Gastrocnemius medialis (tissue), 4 donors: ENCODE measurements at regions of chr2 and their contacts with region 1.

Region 1: GRCh38 chr2:156341452-156342253 is 9.1 kb upstream of the NR4A2 start:
- DNase-seq: peak; percentile 79 to 87
- ATAC-seq: peak; percentile 83 to 84
- H3K4me3 ChIP-seq: peak overlapping the region; percentile 92 to 99 (median 96)
- H3K27ac ChIP-seq: peak overlapping the region; percentile 98 to 100 (median 100)
- H3K4me1 ChIP-seq: peaks cover 16 to 29% of the 10 kb centered on the region in 2 donors
- H3K27me3 ChIP-seq: no peaks in the 10 kb centered on the region
- CTCF ChIP-seq: no peak
- POLR2A ChIP-seq: peak; percentile 65 to 71

Region 2: DNA sequence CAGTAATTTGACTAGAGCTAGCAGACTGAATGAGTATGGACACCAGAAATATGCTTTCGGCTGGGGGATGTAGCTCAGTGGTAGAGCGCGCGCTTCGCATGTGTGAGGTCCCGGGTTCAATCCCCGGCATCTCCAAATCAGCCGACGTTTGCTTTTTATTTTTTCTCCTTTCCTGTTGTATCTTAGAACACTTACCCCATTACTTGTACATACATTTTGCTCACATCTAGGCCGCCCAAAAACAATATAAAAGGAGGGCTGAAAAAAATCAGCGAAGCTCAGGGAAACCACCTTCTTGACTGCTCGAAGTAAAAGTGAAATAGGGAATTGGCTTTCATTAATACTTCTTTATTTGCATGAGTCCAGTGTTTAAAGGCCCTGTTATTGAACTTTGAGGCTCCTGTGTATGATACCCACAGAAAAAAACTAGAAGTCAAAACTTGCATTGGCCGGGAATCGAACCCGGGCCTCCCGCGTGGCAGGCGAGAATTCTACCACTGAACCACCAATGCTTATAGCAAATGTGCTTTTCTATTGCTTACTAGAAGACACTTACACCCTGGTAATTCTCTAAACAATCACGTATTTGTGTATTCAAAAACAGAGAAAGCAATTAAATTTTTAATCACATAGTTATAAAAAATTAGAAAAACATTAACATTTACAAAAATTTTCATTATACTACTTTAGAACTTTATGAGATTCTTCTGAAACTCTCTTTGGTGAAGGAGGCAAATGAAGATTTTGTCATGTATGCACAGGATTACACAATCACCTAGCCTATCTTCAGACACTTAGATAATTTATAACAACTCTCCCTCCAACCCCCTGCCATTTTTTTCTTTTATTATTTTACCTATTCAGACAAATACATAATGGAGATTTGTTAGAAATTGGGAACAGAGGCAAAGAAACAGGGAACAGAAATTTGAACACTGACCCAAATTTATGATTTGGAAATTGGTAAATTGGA is 59.3 kb after region 1 on chr2:
- in situ Hi-C with region 1: loop called in 3 of 4 experiments (anchors 10 kb)
- intact Hi-C with region 1: loop called (anchors 1 kb)
- DNase-seq: peak; percentile 39 to 44
- ATAC-seq: peak; percentile 71 to 86
- H3K4me3 ChIP-seq: peak overlapping the region; percentile 60 to 73 (median 69)
- H3K27ac ChIP-seq: peak overlapping the region; percentile 88 to 98 (median 92)
- H3K4me1 ChIP-seq: peaks cover 6 to 11% of the 10 kb centered on the region in 2 donors
- H3K27me3 ChIP-seq: no peaks in the 10 kb centered on the region
- CTCF ChIP-seq: no peak
- POLR2A ChIP-seq: no peak

Region 3: GRCh38 chr2:156445296-156446217 is 103.9 kb after region 1 on chr2:
- in situ Hi-C with region 1: loop called in 1 of 4 experiments (anchors 10 kb)
- intact Hi-C with region 1: no loop called
- DNase-seq: no peak
- ATAC-seq: peak; percentile 30 to 90
- H3K4me3 ChIP-seq: no peak overlapping the region
- H3K27ac ChIP-seq: peak overlapping the region in 3 of 4 donors; percentile 33 to 56 (median 52)
- H3K4me1 ChIP-seq: peaks cover 14 to 25% of the 10 kb centered on the region in 2 donors
- H3K27me3 ChIP-seq: no peaks in the 10 kb centered on the region
- CTCF ChIP-seq: no peak
- POLR2A ChIP-seq: no peak

Region 4: GRCh38 chr2:156589381-156590079 is 247.9 kb after region 1 on chr2:
- in situ Hi-C with region 1: loop called in 2 of 4 experiments (anchors 10 to 25 kb)
- intact Hi-C with region 1: loop called (anchors 5 kb)
- DNase-seq: no peak
- ATAC-seq: peak in 1 of 2 donors; percentile 64
- H3K4me3 ChIP-seq: no peak overlapping the region
- H3K27ac ChIP-seq: no peak overlapping the region
- H3K4me1 ChIP-seq: no peaks in the 10 kb centered on the region
- H3K27me3 ChIP-seq: no peaks in the 10 kb centered on the region
- CTCF ChIP-seq: peak in 4 of 5 experiments; percentile 14 to 55 (median 48)
- POLR2A ChIP-seq: no peak

Region 5: DNA sequence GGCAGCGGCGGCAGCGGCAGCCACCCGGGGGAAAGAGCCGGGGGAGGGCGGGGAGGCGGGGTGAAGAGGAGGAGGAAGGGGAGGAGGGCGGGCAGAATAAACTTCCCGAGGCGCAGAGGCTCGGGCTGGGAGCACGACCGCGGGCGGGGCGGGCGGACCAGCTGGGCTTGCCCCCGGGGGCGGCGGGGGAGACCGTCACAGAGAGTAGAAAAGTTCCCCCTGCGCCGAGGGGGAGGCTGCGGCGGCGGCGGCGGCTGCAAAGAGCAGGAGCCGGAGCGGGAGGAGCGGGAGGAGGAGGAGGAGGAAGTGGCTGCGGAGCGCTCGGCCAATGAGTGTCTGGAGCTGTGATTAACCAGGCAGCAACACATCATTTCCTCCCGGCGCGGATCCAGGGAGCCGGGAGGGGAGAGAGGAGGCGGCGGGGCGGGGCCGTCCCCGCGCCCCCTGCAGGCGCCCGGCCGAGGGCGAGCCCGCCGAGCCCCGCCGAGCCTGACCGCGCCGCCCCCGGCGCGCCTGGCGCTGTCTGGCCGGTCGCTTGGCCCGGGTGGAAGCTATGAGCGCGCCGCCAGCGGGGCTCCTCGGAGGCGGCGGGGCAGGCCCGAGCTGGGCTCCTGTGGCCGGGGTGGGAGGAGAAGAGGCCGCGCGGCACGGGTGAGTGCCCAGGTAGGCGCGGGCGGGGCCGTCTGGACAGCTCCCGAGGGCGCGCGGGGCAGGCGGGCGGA is 1534.6 kb after region 1 on chr2 and contains the start of gene ACVR1:
- in situ Hi-C with region 1: no loop called
- intact Hi-C with region 1: loop called (anchors 10 kb)
- DNase-seq: peak; percentile 96 to 97
- ATAC-seq: peak; percentile 93 to 94
- H3K4me3 ChIP-seq: peak within 1 kb of the TSS; percentile 81 to 92 (median 84)
- H3K27ac ChIP-seq: peak within 1 kb of the TSS; percentile 93 to 97 (median 96)
- H3K4me1 ChIP-seq: peaks cover 41 to 45% of the 10 kb centered on the region in 2 donors
- H3K27me3 ChIP-seq: no peaks in the 10 kb centered on the region
- CTCF ChIP-seq: peak; percentile 43 to 83 (median 66)
- POLR2A ChIP-seq: peak; percentile 76 to 85
- total RNA-seq, gene ACVR1: 10.8 to 18.4 (median 12.2) TPM